Motor neuron (in vitro differentiated cells): ENCODE measurements at regions of chr5 and their contacts with region 1.

Region 1: DNA sequence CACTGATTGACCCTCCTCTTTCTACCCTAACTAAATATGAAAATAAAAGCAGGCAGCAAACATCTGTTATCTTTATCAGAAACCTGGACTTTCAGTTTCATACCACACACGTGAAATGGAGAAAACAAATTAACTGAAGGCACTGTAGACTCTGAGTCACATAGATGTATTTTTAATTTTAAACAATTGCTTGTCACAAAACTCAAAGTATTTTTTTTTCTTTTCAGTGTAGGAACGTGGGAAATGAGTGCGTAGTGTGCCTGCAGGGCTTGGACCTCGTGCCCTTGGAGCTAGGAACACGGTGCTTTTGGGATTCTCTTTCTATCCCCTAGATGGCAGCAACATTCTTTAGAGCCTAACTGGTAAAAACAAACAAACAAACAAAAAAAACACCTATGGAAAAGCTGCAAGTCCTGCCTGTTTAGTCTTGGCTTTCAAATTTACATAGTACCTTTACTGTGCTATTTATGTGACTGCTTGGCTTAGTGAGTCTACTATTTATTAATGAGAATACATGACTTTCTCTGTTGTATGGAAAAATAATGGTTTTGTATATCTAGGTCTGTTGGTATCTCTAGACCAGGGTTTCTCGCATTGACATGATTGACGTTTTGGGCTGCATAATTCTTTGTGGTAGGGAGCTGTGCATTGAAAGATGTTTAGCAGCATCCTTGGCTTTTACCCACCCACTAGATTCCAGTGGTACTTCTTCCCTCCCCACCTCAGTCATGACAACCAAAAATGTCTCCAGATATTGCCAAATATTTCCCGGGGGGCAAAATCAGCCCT is 16.8 kb upstream of the ACTBL2 start:
- ATAC-seq: peak in 7 of 8 experiments; percentile 20 to 68 (median 52)
- H3K4me3 ChIP-seq: no peak overlapping the region
- H3K27ac ChIP-seq: no peak overlapping the region
- H3K4me1 ChIP-seq: peaks cover 2 to 10% of the 10 kb centered on the region in 2 donors

Region 2: GRCh38 chr5:57754616-57755015 is 255.2 kb after region 1 on chr5:
- in situ Hi-C with region 1: loop called in 1 of 9 experiments (anchors 25 kb)
- ATAC-seq: peak in 1 of 8 experiments; percentile 41
- H3K4me3 ChIP-seq: no peak overlapping the region
- H3K27ac ChIP-seq: no peak overlapping the region
- H3K4me1 ChIP-seq: no peaks in the 10 kb centered on the region

Region 3: DNA sequence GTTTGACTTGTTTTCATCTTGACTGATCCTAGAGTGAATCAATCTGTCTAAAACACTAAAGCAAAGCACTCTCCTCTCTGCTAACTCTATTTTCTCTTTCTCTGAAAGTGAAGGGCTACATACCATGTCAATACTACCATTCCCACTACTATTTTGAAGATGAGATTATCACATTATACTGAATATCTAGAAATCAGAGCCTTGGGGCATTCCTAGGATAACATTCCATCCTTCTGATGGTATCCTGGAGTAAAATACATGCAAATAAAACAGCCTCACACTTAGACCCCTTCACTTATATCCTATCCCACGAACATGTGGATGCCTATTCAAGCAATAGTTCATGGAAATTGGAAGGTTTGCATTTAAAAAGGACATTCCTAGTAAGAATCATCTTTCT is 292.4 kb after region 1 on chr5:
- in situ Hi-C with region 1: no loop called
- ATAC-seq: no peak
- H3K4me3 ChIP-seq: no peak overlapping the region
- H3K27ac ChIP-seq: no peak overlapping the region
- H3K4me1 ChIP-seq: peaks cover 0 to 5% of the 10 kb centered on the region in 2 donors